Aorta (tissue), 5 donors: ENCODE measurements at regions of chr4 and their contacts with region 1.

Region 1: DNA sequence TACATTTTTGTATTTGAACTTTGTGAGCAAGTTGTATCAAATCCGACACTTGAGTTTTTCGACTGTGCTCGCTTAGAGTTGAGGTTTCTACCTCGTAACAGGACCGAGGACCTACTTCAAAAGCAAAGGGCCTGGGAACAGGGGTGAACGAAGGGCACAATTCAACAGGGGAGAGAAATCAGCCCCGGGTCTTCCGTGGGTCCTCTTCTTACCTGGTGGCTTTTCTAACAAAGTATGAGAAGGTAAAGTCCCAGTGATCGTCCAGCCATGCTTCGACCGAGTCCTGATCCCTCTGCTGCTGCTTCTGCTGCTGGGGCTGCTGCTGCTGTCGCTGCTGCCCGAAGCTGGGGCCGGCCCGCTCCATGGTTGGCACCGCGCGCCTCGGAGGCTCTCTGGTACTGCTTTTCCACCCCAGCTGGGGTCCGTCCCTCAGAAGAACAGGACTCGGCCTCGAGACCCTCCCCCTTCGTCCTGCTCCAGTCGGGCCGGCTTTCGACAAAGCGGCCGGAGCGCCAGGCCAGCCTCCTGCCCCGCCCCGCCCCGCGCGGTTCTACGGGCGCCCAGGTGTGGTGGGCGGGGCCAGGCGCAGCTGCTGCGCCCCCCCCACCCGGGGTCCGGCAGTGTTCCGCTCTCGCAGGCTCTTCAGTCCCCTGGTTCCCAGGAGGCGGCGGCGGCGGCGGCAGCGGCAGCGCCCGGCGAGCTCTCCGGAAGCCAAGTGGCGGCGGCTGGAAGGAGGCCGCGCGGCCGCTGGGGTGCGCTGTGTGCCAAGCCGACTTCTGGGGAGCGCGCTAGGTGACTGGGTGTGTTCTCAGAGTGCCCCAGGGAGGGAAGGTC is at the start of gene PDE5A:
- DNase-seq: peak; percentile 87 to 94
- ATAC-seq: peak; percentile 89
- H3K4me3 ChIP-seq: peak within 1 kb of the TSS; percentile 63 to 67
- H3K27ac ChIP-seq: peak within 1 kb of the TSS; percentile 89 to 96
- H3K4me1 ChIP-seq: no peaks in the 10 kb centered on the region
- H3K27me3 ChIP-seq: no peaks in the 10 kb centered on the region
- total RNA-seq, gene PDE5A: 196 to 343 TPM

Region 2: GRCh38 chr4:119113033-119113655 is 515.4 kb before region 1 on chr4:
- intact Hi-C with region 1: no loop called
- DNase-seq: no peak
- ATAC-seq: peak; percentile 80
- H3K4me3 ChIP-seq: no peak overlapping the region
- H3K27ac ChIP-seq: no peak overlapping the region
- H3K4me1 ChIP-seq: peaks cover 0 to 4% of the 10 kb centered on the region in 2 donors
- H3K27me3 ChIP-seq: no peaks in the 10 kb centered on the region

Region 3: GRCh38 chr4:119314356-119314755 is 314.2 kb before region 1 on chr4:
- intact Hi-C with region 1: loop called in 1 of 2 experiments (anchors 5 kb)
- DNase-seq: no peak
- ATAC-seq: peak; percentile 87
- H3K4me3 ChIP-seq: no peak overlapping the region
- H3K27ac ChIP-seq: no peak overlapping the region
- H3K4me1 ChIP-seq: peaks cover 2 to 5% of the 10 kb centered on the region in 2 donors
- H3K27me3 ChIP-seq: no peaks in the 10 kb centered on the region

Region 4: GRCh38 chr4:119559044-119559647 is 69.4 kb before region 1 on chr4:
- intact Hi-C with region 1: loop called (anchors 5 to 10 kb)
- DNase-seq: no peak
- ATAC-seq: peak; percentile 70
- H3K4me3 ChIP-seq: no peak overlapping the region
- H3K27ac ChIP-seq: no peak overlapping the region
- H3K4me1 ChIP-seq: no peaks in the 10 kb centered on the region
- H3K27me3 ChIP-seq: no peaks in the 10 kb centered on the region

Region 5: GRCh38 chr4:119785963-119786362 is 157.4 kb after region 1 on chr4:
- intact Hi-C with region 1: loop called in 1 of 2 experiments (anchors 5 kb)
- DNase-seq: no peak
- ATAC-seq: no peak
- H3K4me3 ChIP-seq: no peak overlapping the region
- H3K27ac ChIP-seq: no peak overlapping the region
- H3K4me1 ChIP-seq: peaks cover 0 to 2% of the 10 kb centered on the region in 2 donors
- H3K27me3 ChIP-seq: no peaks in the 10 kb centered on the region

Region 6: DNA sequence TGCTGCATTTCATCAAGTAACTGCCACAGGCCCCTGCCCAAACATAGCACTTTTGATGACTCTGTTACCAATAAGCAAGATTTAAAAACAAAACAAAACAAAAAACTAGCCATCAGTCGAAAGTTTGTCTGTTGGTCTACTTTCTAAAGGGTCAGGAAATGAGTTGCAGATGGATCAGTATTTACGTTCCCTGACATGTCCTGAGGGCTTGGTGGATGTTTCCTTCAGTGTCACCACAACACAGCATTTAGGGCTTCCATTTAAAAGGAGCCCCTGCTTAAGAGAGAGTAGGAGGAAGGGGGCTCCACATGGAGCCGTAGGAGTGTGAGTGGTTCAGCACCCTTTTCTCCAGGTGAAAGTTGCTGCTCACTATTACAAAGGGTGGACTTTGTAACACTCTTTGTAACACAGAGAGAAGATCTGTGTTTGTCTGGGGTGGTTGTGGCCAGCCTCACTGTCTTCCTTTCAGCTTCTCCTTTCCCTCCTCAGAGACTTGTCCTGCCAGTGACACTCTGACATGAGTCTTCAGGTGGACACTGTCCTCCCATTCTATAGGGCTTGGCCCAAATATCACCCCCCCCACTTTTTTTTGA is 167.6 kb after region 1 on chr4:
- intact Hi-C with region 1: no loop called
- DNase-seq: no peak
- ATAC-seq: no peak
- H3K4me3 ChIP-seq: no peak overlapping the region
- H3K27ac ChIP-seq: peak overlapping the region in 1 of 2 donors; percentile 25
- H3K4me1 ChIP-seq: no peaks in the 10 kb centered on the region
- H3K27me3 ChIP-seq: no peaks in the 10 kb centered on the region

Region 7: DNA sequence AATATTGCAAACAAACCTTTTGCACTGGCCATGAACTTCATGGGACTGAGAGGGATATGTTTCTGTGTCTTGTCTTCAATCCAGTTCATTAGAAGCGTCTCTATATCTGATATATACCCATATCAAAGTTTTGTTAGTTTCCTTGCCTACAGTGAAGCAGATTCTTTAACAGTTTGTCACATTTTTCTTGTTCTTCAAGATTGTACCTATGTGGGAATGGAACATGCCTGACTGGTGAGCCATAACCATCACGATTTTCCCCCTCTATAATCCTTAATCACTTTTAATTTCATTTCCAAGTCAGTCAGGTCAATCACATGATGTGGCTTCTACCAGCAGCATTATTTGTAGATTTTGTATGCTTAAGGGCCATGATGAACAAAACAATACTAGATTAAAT is 197.2 kb after region 1 on chr4:
- intact Hi-C with region 1: no loop called
- DNase-seq: no peak
- ATAC-seq: no peak
- H3K4me3 ChIP-seq: no peak overlapping the region
- H3K27ac ChIP-seq: no peak overlapping the region
- H3K4me1 ChIP-seq: no peaks in the 10 kb centered on the region
- H3K27me3 ChIP-seq: no peaks in the 10 kb centered on the region

Region 8: GRCh38 chr4:119861731-119862130 is 233.2 kb after region 1 on chr4:
- intact Hi-C with region 1: loop called in 1 of 2 experiments (anchors 10 kb)
- DNase-seq: no peak
- ATAC-seq: no peak
- H3K4me3 ChIP-seq: no peak overlapping the region
- H3K27ac ChIP-seq: no peak overlapping the region
- H3K4me1 ChIP-seq: no peaks in the 10 kb centered on the region
- H3K27me3 ChIP-seq: no peaks in the 10 kb centered on the region